HEK293 (cell line): ENCODE measurements at regions of chr2 and their contacts with region 1.

Region 1: GRCh38 chr2:112645310-112646101 is at the start of gene SLC20A1:
- H3K4me3 ChIP-seq: peak within 1 kb of the TSS; percentile 93
- H3K27ac ChIP-seq: peak within 1 kb of the TSS; percentile 97
- H3K4me1 ChIP-seq: peaks cover 4% of the 10 kb centered on the region
- CTCF ChIP-seq: peak; percentile 83

Region 2: GRCh38 chr2:112626604-112627059 is 18.9 kb before region 1 on chr2:
- CTCF ChIA-PET with region 1: interaction called, 19 read pairs
- POLR2A ChIA-PET with region 1: interaction called, 36 read pairs
- H3K4me3 ChIP-seq: no peak overlapping the region
- H3K27ac ChIP-seq: no peak overlapping the region
- H3K4me1 ChIP-seq: peaks cover 8% of the 10 kb centered on the region
- CTCF ChIP-seq: peak; percentile 91

Region 3: GRCh38 chr2:112634153-112634873 is 11.2 kb before region 1 on chr2:
- CTCF ChIA-PET with region 1: interaction called, 16 read pairs
- POLR2A ChIA-PET with region 1: interaction called, 36 read pairs
- H3K4me3 ChIP-seq: no peak overlapping the region
- H3K27ac ChIP-seq: no peak overlapping the region
- H3K4me1 ChIP-seq: peaks cover 9% of the 10 kb centered on the region
- CTCF ChIP-seq: no peak